HEK293 (cell line): ENCODE measurements at regions of chr4 and their contacts with region 1.

Region 1: GRCh38 chr4:8267077-8267476 is 2.5 kb upstream of the HTRA3 start:
- H3K4me3 ChIP-seq: no peak overlapping the region
- H3K27ac ChIP-seq: no peak overlapping the region
- H3K4me1 ChIP-seq: no peaks in the 10 kb centered on the region
- CTCF ChIP-seq: peak; percentile 73

Region 2: DNA sequence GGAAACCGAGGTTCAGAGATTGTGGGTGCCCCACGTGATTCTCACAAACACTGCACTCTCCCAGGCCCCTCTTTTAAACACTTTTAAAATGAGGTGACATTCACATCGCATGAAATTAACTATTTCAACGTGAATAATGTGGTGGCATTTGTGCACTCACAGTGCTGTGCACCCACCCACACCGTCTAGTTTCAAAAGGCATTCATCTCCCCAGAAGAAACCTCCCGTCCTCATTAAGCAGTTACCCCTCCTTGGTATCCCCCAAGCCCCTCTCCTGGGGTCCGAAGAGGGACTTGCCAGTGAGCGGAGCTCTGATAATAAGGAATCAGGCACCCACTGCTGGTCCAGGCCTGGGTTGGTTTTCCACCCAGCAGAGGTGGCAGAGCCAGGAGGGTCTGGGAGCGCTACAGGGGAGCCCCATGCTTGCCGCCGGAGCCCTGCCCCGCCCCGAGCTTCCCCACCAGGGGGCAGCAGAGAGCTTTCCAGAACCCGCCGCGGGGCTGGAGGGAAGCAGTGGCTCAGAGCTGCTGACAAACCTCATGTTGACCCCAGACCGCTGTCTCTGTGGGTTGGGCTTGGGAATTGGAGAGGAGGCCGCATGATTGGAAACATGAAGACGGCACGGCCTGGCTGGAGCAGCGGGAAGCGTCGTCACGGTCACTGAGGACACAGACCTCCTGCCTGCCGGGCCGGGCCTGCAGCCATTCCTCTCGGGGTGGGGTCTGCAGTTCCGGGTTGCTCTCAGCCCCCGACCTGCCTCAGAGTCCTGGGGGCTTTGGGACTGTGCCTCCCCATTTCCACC is 25.0 kb before region 1 on chr4:
- CTCF ChIA-PET with region 1: interaction called, 25 read pairs
- POLR2A ChIA-PET with region 1: no interaction called
- H3K4me3 ChIP-seq: no peak overlapping the region
- H3K27ac ChIP-seq: no peak overlapping the region
- H3K4me1 ChIP-seq: no peaks in the 10 kb centered on the region
- CTCF ChIP-seq: peak; percentile 70

Region 3: DNA sequence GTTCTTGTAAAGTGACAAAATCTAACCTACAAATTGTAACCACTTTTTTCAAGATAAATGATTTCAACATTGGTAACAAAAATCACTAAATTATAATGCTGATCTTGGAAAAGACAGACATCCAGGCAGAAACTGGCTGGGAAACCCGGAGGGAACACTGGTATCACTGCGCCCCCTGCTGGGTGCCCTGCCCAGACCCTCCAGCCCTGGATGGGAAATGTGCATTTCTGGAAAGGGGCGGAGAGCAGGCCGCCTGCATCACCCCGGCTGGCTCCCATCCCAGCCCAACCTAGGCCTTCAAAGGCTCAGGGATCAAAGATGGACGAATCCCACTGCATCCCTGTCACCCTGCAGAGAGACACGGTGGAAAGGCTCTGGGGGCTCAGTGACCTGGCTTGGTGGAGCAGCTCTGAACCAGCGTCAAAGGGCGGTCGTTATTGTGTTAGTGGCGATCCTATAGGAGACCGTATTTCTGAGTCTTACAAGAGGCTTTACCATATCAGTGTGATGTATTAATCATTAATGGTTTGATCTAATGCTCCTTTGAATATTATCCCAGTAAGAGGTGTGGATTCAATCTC is 136.2 kb after region 1 on chr4:
- CTCF ChIA-PET with region 1: interaction called, 27 read pairs
- POLR2A ChIA-PET with region 1: no interaction called
- H3K4me3 ChIP-seq: no peak overlapping the region
- H3K27ac ChIP-seq: no peak overlapping the region
- H3K4me1 ChIP-seq: no peaks in the 10 kb centered on the region
- CTCF ChIP-seq: peak; percentile 50

Region 4: DNA sequence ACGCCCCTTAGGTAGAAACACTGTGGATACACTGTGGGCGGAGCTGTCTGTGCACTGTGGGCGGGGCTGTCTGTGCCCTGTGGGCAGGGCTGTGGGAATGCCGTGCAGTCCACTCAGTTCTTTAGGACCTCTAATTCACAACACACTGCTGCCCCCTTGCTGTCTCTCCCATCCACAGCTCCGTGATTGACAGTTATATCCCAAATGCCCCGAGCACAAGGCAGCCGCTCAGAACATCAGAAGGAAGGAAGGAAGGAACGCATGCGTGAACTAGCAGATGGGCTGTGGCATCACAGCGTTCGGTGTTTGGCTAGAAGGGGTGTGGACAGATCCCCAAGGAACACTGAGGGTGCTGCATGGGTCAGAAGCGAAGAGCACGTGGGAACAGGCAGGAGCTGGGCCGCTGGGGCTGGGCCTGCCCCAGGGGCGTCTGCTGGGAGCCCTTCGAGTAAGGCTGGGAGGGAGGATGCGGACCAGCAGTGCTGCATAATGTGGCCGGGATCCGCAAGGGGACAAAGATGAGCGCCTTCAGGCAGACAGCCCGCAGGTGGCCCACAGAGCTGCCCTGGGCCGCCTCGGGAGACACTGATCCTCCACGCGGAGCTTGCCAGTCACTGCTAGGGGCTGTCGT is 143.7 kb after region 1 on chr4:
- CTCF ChIA-PET with region 1: interaction called, 16 read pairs
- POLR2A ChIA-PET with region 1: no interaction called
- H3K4me3 ChIP-seq: no peak overlapping the region
- H3K27ac ChIP-seq: no peak overlapping the region
- H3K4me1 ChIP-seq: 0 out of 2 replicates have a peak, but pooled peaks cover 2% of the 10 kb centered on the region
- CTCF ChIP-seq: peak; percentile 26

Region 5: GRCh38 chr4:8459867-8460447 is 192.9 kb after region 1 on chr4:
- CTCF ChIA-PET with region 1: no interaction called
- POLR2A ChIA-PET with region 1: no interaction called
- H3K4me3 ChIP-seq: no peak overlapping the region
- H3K27ac ChIP-seq: no peak overlapping the region
- H3K4me1 ChIP-seq: no peaks in the 10 kb centered on the region
- CTCF ChIP-seq: no peak